Activated CD4-positive, alpha-beta memory T cell treated with anti-CD3 and anti-CD28 coated beads for 36 hours (primary cell): ENCODE measurements at regions of chr11 and their contacts with region 1.

Region 1: GRCh38 chr11:95231127-95231880 is at the start of gene SESN3:
- DNase-seq: peak; percentile 99
- H3K4me3 Mint-ChIP-seq: no peak within 1 kb of the TSS
- H3K27ac Mint-ChIP-seq: peak within 1 kb of the TSS; percentile 85
- H3K4me1 Mint-ChIP-seq: peaks cover 53% of the 10 kb centered on the region
- H3K27me3 Mint-ChIP-seq: no peaks in the 10 kb centered on the region
- total RNA-seq, gene SESN3: 13.9 to 15.5 TPM

Region 2: GRCh38 chr11:94973099-94973968 is 258.0 kb before region 1 on chr11 and contains the starts of genes CWC15 and KDM4D:
- CTCF ChIA-PET with region 1: no interaction called
- POLR2A ChIA-PET with region 1: no interaction called
- intact Hi-C with region 1: loop called (anchors 2 kb)
- DNase-seq: peak; percentile 97
- H3K4me3 Mint-ChIP-seq: peak within 1 kb of the TSS; percentile 99
- H3K27ac Mint-ChIP-seq: peak within 1 kb of the TSS; percentile 86
- H3K4me1 Mint-ChIP-seq: peaks cover 34% of the 10 kb centered on the region
- H3K27me3 Mint-ChIP-seq: no peaks in the 10 kb centered on the region
- total RNA-seq, gene CWC15: 65.9 to 67.1 TPM
- total RNA-seq, gene KDM4D: 1.4 to 1.6 TPM

Region 3: DNA sequence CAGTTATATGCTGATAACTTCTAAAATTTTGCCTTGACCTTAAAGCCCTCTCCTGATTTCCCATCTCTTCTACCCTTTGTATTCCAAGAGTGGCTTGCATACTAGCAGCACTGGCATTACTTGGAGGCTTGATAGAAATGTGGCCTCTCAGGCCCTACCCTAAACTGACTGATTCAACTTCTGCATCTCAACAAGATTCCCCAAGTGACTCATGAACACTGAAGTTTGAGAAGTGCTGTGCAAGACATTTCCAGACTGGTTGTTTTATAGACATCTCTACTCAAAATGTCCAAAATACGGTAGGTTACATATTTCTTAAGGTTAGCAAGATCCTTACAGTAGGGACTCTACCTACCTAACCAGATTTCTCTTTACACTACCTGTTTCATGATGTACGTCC is 48.9 kb before region 1 on chr11:
- CTCF ChIA-PET with region 1: no interaction called
- POLR2A ChIA-PET with region 1: no interaction called
- intact Hi-C with region 1: loop called (anchors 1 kb)
- DNase-seq: no peak
- H3K4me3 Mint-ChIP-seq: no peak overlapping the region
- H3K27ac Mint-ChIP-seq: peak overlapping the region; percentile 59
- H3K4me1 Mint-ChIP-seq: peaks cover 25% of the 10 kb centered on the region
- H3K27me3 Mint-ChIP-seq: no peaks in the 10 kb centered on the region

Region 4: GRCh38 chr11:95337175-95337957 is 106.1 kb after region 1 on chr11:
- CTCF ChIA-PET with region 1: interaction called, 4 read pairs
- POLR2A ChIA-PET with region 1: interaction called, 3 read pairs
- intact Hi-C with region 1: loop called (anchors 2 kb)
- DNase-seq: peak; percentile 66
- H3K4me3 Mint-ChIP-seq: no peak overlapping the region
- H3K27ac Mint-ChIP-seq: no peak overlapping the region
- H3K4me1 Mint-ChIP-seq: peaks cover 3% of the 10 kb centered on the region
- H3K27me3 Mint-ChIP-seq: no peaks in the 10 kb centered on the region

Region 5: DNA sequence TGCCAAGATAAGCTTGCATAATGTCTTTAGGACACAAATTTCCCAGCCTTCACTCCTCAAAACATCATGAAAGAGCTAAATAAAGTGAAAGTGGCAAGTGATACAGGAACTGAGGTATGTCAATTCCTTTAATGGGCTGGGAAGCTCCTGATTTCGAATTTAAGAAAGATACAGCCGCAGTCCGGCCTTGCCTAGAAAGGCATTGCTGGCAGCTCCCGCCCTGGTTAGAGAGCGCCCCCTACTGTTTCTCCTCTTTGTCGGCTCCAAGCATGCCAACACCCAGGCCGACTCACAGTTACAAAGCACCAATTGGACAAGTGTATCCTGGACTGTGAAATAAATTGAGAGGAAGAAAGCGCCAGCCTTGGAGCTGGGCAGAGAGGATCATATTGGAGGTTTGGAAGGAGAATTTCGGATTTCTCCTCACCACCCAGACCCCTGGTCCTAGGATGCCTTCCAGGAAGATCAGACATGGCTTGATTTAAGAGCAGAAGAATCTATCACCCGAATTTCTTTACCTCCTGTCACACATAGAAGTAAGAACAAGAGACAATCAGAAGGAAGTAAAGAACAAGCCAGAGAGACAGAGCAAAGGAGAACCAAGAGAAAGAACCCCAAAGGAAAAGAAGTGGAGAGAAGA is 474.3 kb after region 1 on chr11:
- CTCF ChIA-PET with region 1: interaction called, 59 read pairs
- POLR2A ChIA-PET with region 1: interaction called, 12 read pairs
- intact Hi-C with region 1: loop called (anchors 1 kb)
- DNase-seq: peak; percentile 91
- H3K4me3 Mint-ChIP-seq: no peak overlapping the region
- H3K27ac Mint-ChIP-seq: no peak overlapping the region
- H3K4me1 Mint-ChIP-seq: peaks cover 13% of the 10 kb centered on the region
- H3K27me3 Mint-ChIP-seq: no peaks in the 10 kb centered on the region

Region 6: DNA sequence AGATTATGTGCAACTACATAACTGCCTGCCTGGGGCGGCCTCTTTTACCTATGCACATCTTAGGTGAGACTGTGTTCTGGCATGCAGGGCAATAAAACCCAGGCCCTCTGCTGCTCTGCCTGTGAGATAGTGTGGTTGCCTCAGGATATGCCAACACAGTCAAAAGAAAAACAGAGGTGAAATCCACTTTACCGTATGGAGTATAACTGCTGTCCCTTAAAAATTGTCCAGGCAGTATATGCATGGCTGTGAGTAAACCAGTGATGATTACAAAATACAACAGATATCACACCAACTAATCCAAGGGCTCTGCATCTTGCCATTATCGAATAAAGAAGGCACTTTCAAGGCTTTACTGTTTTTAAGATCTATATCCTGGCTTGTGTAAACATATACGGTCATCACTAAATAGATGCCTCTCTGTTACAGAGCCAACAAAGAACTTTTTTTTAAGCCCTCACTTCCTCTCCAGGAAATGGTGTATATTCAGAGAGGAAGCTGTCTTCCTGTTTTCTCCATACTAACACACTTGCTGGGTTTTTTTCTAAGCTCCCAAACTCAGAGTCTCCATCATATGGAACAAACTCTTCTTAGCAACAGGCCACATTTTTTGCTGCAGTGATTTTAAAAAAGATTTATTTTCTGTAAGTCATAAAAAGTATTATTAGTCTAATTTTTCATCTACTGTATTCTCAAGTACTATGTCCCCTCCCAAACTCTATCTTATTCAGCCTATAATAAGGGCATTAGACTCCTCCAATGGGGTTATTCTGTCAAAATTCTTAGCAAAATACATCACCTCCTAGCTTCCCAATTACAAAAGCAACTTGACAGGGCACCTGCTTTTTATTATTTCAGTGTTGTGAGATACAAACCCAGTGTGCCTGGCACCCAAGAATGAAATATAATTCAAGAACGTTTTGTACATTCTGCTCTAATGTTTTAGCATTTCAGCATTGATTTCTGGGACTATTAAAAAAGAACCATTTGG is 976.5 kb after region 1 on chr11:
- CTCF ChIA-PET with region 1: no interaction called
- POLR2A ChIA-PET with region 1: no interaction called
- intact Hi-C with region 1: loop called (anchors 10 kb)
- DNase-seq: peak; percentile 44
- H3K4me3 Mint-ChIP-seq: peak overlapping the region; percentile 55
- H3K27ac Mint-ChIP-seq: peak overlapping the region; percentile 91
- H3K4me1 Mint-ChIP-seq: peaks cover 85% of the 10 kb centered on the region
- H3K27me3 Mint-ChIP-seq: no peaks in the 10 kb centered on the region